ENCODE measurements at regions of chr4 and their contacts with region 1.

Region 1: GRCh38 chr4:174260099-174260498 is 23.4 kb downstream of the FBXO8 start:
- DNase-seq: peak; percentile 67
- H3K4me3 ChIP-seq: no peak overlapping the region
- H3K27ac ChIP-seq: no peak overlapping the region
- H3K4me1 ChIP-seq: peaks cover 41% of the 10 kb centered on the region
- H3K27me3 ChIP-seq: no peaks in the 10 kb centered on the region
- CTCF ChIP-seq: no peak

Region 2: GRCh38 chr4:173793937-173794510 is 466.1 kb before region 1 on chr4:
- CTCF ChIA-PET with region 1: no interaction called
- POLR2A ChIA-PET with region 1: no interaction called
- intact Hi-C with region 1: no loop called
- DNase-seq: no peak
- H3K4me3 ChIP-seq: peak overlapping the region; percentile 24
- H3K27ac ChIP-seq: peak overlapping the region; percentile 70
- H3K4me1 ChIP-seq: peaks cover 22% of the 10 kb centered on the region
- H3K27me3 ChIP-seq: no peaks in the 10 kb centered on the region
- CTCF ChIP-seq: no peak

Region 3: DNA sequence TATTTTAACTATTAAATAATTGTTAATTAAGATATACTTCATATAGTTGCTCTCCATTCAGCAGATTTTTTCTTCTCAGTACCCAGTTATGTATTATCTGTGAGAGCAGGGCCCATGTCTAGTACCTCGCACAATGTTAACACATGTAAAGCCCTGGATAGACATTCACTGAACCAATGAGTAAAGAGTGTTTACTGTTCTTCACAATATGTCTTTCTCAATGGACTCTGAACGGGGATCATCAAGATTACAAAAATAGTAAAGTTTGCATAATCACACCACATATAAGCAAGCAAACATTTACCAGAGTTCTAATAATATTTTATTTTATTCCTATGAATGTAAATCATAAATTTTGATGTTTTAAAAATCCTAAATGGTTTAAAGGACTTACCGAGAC is 23.7 kb before region 1 on chr4:
- CTCF ChIA-PET with region 1: no interaction called
- POLR2A ChIA-PET with region 1: interaction called, 29 read pairs
- intact Hi-C with region 1: no loop called
- DNase-seq: no peak
- H3K4me3 ChIP-seq: no peak overlapping the region
- H3K27ac ChIP-seq: no peak overlapping the region
- H3K4me1 ChIP-seq: no peaks in the 10 kb centered on the region
- H3K27me3 ChIP-seq: no peaks in the 10 kb centered on the region
- CTCF ChIP-seq: no peak